CD4-positive, alpha-beta memory T cell (primary cell): ENCODE measurements at regions of chrX and their contacts with region 1.

Region 1: DNA sequence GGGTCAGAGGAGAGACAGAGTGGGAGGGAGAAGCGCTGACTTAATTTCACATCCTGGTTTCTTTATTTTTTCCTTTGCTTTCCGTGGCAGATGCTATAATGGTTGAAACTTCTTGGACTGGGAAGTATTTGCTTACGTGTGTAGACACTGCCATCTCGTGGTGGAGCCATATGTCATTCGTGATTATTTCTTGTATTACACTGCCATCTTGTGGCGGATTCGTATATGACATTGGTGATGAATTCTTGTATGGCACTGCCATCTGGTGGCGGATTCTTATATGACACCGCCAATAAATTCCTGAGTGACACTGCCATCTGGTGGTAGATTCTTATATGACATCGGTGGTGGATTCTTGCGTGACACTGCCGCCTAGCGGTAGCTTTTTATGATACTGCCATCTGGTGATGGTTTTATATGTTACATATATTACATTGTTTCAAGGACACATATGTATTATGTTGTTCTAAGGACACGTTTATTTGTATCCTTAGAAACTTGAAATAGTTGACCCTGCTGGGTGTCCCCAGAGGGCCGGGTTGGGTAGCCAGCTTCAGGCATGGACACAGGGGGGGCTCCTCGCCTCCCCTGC is 37.3 kb upstream of the CLCN4 start:
- DNase-seq: peak; percentile 73 to 87 (median 82)
- H3K4me3 ChIP-seq: no peak overlapping the region
- H3K4me3 Mint-ChIP-seq: peak overlapping the region in 2 of 8 donors; percentile 1 to 21
- H3K27ac ChIP-seq: no peak overlapping the region
- H3K27ac Mint-ChIP-seq: peak overlapping the region in 6 of 7 donors; percentile 1 to 82 (median 43)
- H3K4me1 ChIP-seq: no peaks in the 10 kb centered on the region
- H3K4me1 Mint-ChIP-seq: peaks cover 1 to 36% (median 7%) of the 10 kb centered on the region in 4 donors
- H3K27me3 ChIP-seq: no peaks in the 10 kb centered on the region
- H3K27me3 Mint-ChIP-seq: no peaks in the 10 kb centered on the region

Region 2: DNA sequence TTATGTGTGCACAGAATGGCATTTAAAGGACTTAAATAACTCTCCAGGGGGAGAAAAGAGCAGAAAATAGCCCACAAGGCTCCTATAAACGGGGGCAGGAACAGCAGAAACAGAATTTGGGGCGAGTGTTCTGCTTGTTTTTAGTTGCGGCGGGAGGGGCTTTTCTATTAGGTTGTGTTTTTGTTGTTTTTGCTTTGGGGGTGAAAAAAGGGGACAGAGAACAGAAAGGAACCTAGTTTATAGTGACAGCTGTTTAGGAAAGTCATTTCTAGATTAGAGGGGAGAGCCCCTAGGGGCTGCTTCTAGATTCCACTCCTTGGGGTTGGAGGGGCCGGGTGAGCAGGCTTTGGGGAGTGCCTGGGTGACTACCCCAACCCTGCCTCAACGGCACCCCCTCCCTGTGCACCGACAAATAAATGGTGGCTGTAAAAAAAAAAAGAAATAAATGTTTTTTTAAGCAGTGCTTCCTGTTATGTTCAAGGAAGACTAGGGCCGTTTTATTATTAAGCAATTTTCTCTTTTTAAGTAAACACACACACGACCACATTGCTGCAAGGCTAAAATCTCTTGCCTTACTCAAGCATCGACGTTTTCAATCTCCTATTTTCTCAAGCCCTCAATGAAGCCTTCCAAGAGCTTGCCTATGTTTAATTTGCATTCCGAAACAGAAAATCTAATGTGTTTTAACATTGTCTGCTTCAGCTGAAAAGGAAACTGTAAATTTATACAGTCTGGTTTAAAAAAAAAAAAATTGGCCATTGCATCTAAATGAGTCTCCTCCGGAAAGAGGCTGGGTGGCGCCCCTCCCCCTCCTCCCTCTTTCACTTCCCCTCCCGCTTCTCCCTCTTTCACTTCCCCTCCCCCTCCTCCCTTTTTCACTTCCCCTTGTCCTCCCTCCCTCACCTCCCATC is 777.9 kb before region 1 on chrX:
- CTCF ChIA-PET with region 1: no interaction called
- POLR2A ChIA-PET with region 1: no interaction called
- intact Hi-C with region 1: loop called (anchors 10 kb)
- DNase-seq: peak; percentile 64 to 77 (median 72)
- H3K4me3 ChIP-seq: peak overlapping the region; percentile 4 to 36
- H3K4me3 Mint-ChIP-seq: peak overlapping the region; percentile 77 to 89 (median 84)
- H3K27ac ChIP-seq: peak overlapping the region; percentile 58
- H3K27ac Mint-ChIP-seq: peak overlapping the region; percentile 94 to 98 (median 95)
- H3K4me1 ChIP-seq: peaks cover 51% of the 10 kb centered on the region
- H3K4me1 Mint-ChIP-seq: peaks cover 29 to 53% (median 40%) of the 10 kb centered on the region in 4 donors
- H3K27me3 ChIP-seq: no peaks in the 10 kb centered on the region
- H3K27me3 Mint-ChIP-seq: no peaks in the 10 kb centered on the region

Region 3: GRCh38 chrX:9995855-9996339 is 123.6 kb before region 1 on chrX:
- CTCF ChIA-PET with region 1: interaction called, 130 read pairs
- POLR2A ChIA-PET with region 1: interaction called, 4 read pairs
- intact Hi-C with region 1: loop called (anchors 1 kb)
- DNase-seq: peak; percentile 63 to 74 (median 73)
- H3K4me3 ChIP-seq: no peak overlapping the region
- H3K4me3 Mint-ChIP-seq: no peak overlapping the region
- H3K27ac ChIP-seq: no peak overlapping the region
- H3K27ac Mint-ChIP-seq: peak overlapping the region in 1 of 7 donors; percentile 27
- H3K4me1 ChIP-seq: no peaks in the 10 kb centered on the region
- H3K4me1 Mint-ChIP-seq: peaks cover 0 to 6% (median 4%) of the 10 kb centered on the region in 4 donors
- H3K27me3 ChIP-seq: no peaks in the 10 kb centered on the region
- H3K27me3 Mint-ChIP-seq: no peaks in the 10 kb centered on the region

Region 4: GRCh38 chrX:10071451-10072144 is 47.9 kb before region 1 on chrX:
- CTCF ChIA-PET with region 1: interaction called, 23 read pairs
- POLR2A ChIA-PET with region 1: interaction called, 3 read pairs
- intact Hi-C with region 1: no loop called
- DNase-seq: no peak
- H3K4me3 ChIP-seq: no peak overlapping the region
- H3K4me3 Mint-ChIP-seq: no peak overlapping the region
- H3K27ac ChIP-seq: no peak overlapping the region
- H3K27ac Mint-ChIP-seq: peak overlapping the region in 1 of 7 donors; percentile 65
- H3K4me1 ChIP-seq: peaks cover 12% of the 10 kb centered on the region
- H3K4me1 Mint-ChIP-seq: peaks cover 2 to 17% (median 11%) of the 10 kb centered on the region in 4 donors
- H3K27me3 ChIP-seq: no peaks in the 10 kb centered on the region
- H3K27me3 Mint-ChIP-seq: no peaks in the 10 kb centered on the region

Region 5: DNA sequence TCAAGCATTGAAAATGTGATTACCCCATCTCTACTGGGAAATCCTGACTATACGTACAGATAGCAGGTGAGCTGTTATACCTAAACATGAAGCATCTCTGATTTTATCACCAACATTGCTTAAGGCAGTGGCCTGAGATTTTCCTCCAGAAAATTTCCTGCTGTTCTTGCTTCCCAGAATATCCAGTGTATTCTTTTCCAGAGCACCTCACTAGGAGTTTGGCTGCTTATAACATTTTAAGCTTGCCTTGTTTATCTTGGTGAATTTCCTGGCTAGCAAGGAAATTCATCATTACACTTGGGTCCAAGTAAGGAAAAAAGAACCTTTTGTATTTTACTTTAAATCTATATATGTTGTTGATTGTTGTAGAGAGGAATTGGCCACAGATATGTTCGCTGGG is 35.7 kb before region 1 on chrX:
- CTCF ChIA-PET with region 1: interaction called, 13 read pairs
- POLR2A ChIA-PET with region 1: no interaction called
- intact Hi-C with region 1: no loop called
- DNase-seq: no peak
- H3K4me3 ChIP-seq: no peak overlapping the region
- H3K4me3 Mint-ChIP-seq: peak overlapping the region in 4 of 8 donors; percentile 10 to 81 (median 68)
- H3K27ac ChIP-seq: peak overlapping the region; percentile 64
- H3K27ac Mint-ChIP-seq: peak overlapping the region; percentile 30 to 98 (median 95)
- H3K4me1 ChIP-seq: peaks cover 55% of the 10 kb centered on the region
- H3K4me1 Mint-ChIP-seq: peaks cover 28 to 55% (median 37%) of the 10 kb centered on the region in 4 donors
- H3K27me3 ChIP-seq: no peaks in the 10 kb centered on the region
- H3K27me3 Mint-ChIP-seq: no peaks in the 10 kb centered on the region

Region 6: GRCh38 chrX:10098270-10098713 is 21.2 kb before region 1 on chrX:
- CTCF ChIA-PET with region 1: interaction called, 20 read pairs
- POLR2A ChIA-PET with region 1: interaction called, 7 read pairs
- intact Hi-C with region 1: loop called (anchors 1 kb)
- DNase-seq: peak; percentile 46 to 82 (median 64)
- H3K4me3 ChIP-seq: peak overlapping the region; percentile 63 to 91
- H3K4me3 Mint-ChIP-seq: peak overlapping the region; percentile 83 to 96 (median 92)
- H3K27ac ChIP-seq: peak overlapping the region; percentile 67
- H3K27ac Mint-ChIP-seq: peak overlapping the region; percentile 89 to 96 (median 95)
- H3K4me1 ChIP-seq: peaks cover 57% of the 10 kb centered on the region
- H3K4me1 Mint-ChIP-seq: peaks cover 22 to 71% (median 43%) of the 10 kb centered on the region in 4 donors
- H3K27me3 ChIP-seq: no peaks in the 10 kb centered on the region
- H3K27me3 Mint-ChIP-seq: no peaks in the 10 kb centered on the region

Region 7: GRCh38 chrX:10288384-10288975 is 169.0 kb after region 1 on chrX:
- CTCF ChIA-PET with region 1: no interaction called
- POLR2A ChIA-PET with region 1: no interaction called
- intact Hi-C with region 1: no loop called
- DNase-seq: no peak
- H3K4me3 ChIP-seq: no peak overlapping the region
- H3K4me3 Mint-ChIP-seq: no peak overlapping the region
- H3K27ac ChIP-seq: no peak overlapping the region
- H3K27ac Mint-ChIP-seq: no peak overlapping the region
- H3K4me1 ChIP-seq: no peaks in the 10 kb centered on the region
- H3K4me1 Mint-ChIP-seq: no peaks in the 10 kb centered on the region
- H3K27me3 ChIP-seq: no peaks in the 10 kb centered on the region
- H3K27me3 Mint-ChIP-seq: no peaks in the 10 kb centered on the region